ENCODE measurements at regions of chr18 and their contacts with region 1.

Region 1: GRCh38 chr18:79378542-79379250 is 17.0 kb upstream of the NFATC1 start:
- DNase-seq: no peak
- ATAC-seq: peak; percentile 85
- H3K4me3 ChIP-seq: no peak overlapping the region
- H3K27ac ChIP-seq: no peak overlapping the region
- H3K4me1 ChIP-seq: peaks cover 0 to 5% of the 10 kb centered on the region in 2 experiments; a peak in 1 of 4 replicates
- H3K27me3 ChIP-seq: no peaks in the 10 kb centered on the region
- CTCF ChIP-seq: peak; percentile 73 to 92 (median 92); a peak in 5 of 6 replicates
- POLR2A ChIP-seq: no peak
- RAD21 ChIP-seq: peak; percentile 80

Region 2: GRCh38 chr18:79528846-79529245 is 150.2 kb after region 1 on chr18:
- CTCF ChIA-PET with region 1: interaction called, 4 read pairs
- POLR2A ChIA-PET with region 1: no interaction called
- RAD21 ChIA-PET with region 1: no interaction called
- intact Hi-C with region 1: loop called (anchors 1 kb)
- DNase-seq: peak; percentile 21
- ATAC-seq: peak; percentile 84
- H3K4me3 ChIP-seq: no peak overlapping the region
- H3K27ac ChIP-seq: no peak overlapping the region
- H3K4me1 ChIP-seq: no peaks in the 10 kb centered on the region
- H3K27me3 ChIP-seq: no peaks in the 10 kb centered on the region
- CTCF ChIP-seq: peak; percentile 65 to 85 (median 77)
- POLR2A ChIP-seq: no peak
- RAD21 ChIP-seq: peak; percentile 86

Region 3: GRCh38 chr18:79644006-79644665 is 265.4 kb after region 1 on chr18:
- CTCF ChIA-PET with region 1: interaction called, 4 read pairs
- POLR2A ChIA-PET with region 1: no interaction called
- RAD21 ChIA-PET with region 1: no interaction called
- intact Hi-C with region 1: loop called (anchors 1 kb)
- DNase-seq: peak; percentile 88
- ATAC-seq: peak; percentile 99
- H3K4me3 ChIP-seq: no peak overlapping the region
- H3K27ac ChIP-seq: no peak overlapping the region
- H3K4me1 ChIP-seq: peaks cover 0 to 5% of the 10 kb centered on the region in 2 experiments; a peak in 1 of 4 replicates
- H3K27me3 ChIP-seq: no peaks in the 10 kb centered on the region
- CTCF ChIP-seq: peak; percentile 88 to 95 (median 90)
- POLR2A ChIP-seq: no peak
- RAD21 ChIP-seq: peak; percentile 99

Region 4: DNA sequence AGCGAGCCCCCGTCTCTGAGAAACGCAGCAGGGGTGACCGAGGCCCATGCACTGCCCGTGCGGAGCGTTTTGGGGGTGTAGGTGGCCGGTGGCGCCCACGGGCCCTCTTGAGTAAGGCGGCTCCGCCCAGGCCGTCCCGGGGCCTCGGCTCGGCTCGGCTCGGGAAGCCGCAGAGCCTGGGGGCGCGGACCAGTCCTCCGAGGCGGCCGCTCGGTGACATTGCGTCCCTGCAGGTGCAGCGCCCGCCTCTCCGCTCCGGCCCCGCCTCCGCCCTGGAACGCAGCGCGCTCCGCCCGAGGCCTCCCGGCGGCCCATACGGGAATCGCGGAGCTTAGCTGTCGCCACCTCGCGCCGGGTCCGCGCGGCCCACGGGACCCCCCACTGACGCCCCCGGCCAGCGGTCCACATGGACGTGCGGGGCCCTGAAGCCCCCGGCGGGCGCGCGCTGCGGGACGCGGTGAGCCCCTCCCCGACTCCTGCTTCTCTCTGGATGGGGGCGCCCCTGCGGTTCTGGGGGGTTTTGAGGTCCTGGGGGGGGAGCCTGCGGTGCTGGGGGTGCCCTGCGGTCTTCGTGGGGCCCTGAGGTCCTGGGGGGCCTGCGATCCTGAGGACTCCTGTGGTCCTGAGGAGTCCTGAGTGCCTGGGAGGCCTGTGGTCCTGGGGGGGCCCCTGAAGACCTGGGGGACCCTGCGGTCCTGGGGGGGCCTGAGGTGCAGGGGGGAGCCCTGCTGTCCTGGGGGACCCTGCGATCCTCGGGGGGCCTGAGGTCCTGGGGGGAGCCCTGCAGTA is 585.8 kb after region 1 on chr18 and contains the start of gene HSBP1L1:
- CTCF ChIA-PET with region 1: no interaction called
- POLR2A ChIA-PET with region 1: no interaction called
- RAD21 ChIA-PET with region 1: no interaction called
- intact Hi-C with region 1: loop called (anchors 5 kb)
- DNase-seq: peak; percentile 48
- ATAC-seq: peak; percentile 85
- H3K4me3 ChIP-seq: peak within 1 kb of the TSS; percentile 76 to 83
- H3K27ac ChIP-seq: peak within 1 kb of the TSS; percentile 90
- H3K4me1 ChIP-seq: peaks cover 43 to 76% of the 10 kb centered on the region in 2 experiments
- H3K27me3 ChIP-seq: no peaks in the 10 kb centered on the region
- CTCF ChIP-seq: peak in 2 of 3 experiments; percentile 19 to 22; a peak in 1 of 6 replicates
- POLR2A ChIP-seq: no peak
- RAD21 ChIP-seq: no peak
- total RNA-seq, gene HSBP1L1: 41.4 TPM

Measured in HCT116 (cell line).